Heart right ventricle (tissue), 16 donors: ENCODE measurements at regions of chr5 and their contacts with region 1.

Region 1: GRCh38 chr5:122845229-122846050 is at the start of gene SNX24:
- DNase-seq: peak; percentile 75 to 84
- ATAC-seq: peak; percentile 89 to 95 (median 92)
- H3K4me3 ChIP-seq: peak within 1 kb of the TSS; percentile 90 to 98 (median 96)
- H3K27ac ChIP-seq: peak within 1 kb of the TSS; percentile 49 to 93 (median 90)
- H3K4me1 ChIP-seq: peaks cover 0 to 43% (median 13%) of the 10 kb centered on the region in 9 donors
- H3K27me3 ChIP-seq: no peaks in the 10 kb centered on the region
- CTCF ChIP-seq: no peak
- total RNA-seq, gene SNX24: 11.7 to 16.3 (median 13.8) TPM

Region 2: DNA sequence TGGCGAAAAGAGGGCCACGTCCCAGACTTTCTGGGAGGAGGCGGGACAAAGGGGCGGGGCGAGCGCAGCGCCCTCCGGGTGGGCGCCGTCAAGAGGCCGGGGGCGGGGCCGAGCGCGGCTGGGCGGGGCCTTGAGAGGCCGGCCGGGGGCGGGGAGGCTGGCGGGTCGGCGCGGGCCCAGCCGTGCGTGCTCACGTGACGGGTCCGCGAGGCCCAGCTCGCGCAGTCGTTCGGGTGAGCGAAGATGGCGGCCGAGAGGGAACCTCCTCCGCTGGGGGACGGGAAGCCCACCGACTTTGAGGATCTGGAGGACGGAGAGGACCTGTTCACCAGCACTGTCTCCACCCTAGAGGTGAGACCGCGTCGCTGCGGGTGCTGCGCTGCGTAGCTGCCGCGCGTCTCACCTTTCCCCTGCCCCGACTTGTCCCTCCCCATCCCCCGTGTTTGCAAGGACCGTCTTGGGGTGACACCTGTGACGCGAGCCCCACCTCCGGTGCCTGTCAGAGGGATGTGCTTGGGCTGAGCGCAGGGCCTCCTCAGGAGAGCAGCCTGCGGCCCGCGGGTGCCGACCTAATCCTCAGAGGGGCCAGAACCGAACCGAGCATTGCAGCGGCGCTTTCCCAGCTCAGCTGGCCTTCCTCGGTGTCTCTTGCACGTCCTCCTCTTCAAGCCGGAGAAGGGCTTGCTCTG is 70.4 kb before region 1 on chr5 and contains the start of gene SNX2:
- intact Hi-C with region 1: loop called in 4 of 10 experiments (anchors 2 to 10 kb)
- DNase-seq: peak; percentile 91 to 97
- ATAC-seq: peak; percentile 98 to 100 (median 100)
- H3K4me3 ChIP-seq: peak within 1 kb of the TSS; percentile 63 to 96 (median 80)
- H3K27ac ChIP-seq: peak within 1 kb of the TSS in 9 of 10 donors; percentile 57 to 93 (median 86)
- H3K4me1 ChIP-seq: peaks cover 0 to 57% (median 19%) of the 10 kb centered on the region in 9 donors
- H3K27me3 ChIP-seq: no peaks in the 10 kb centered on the region
- CTCF ChIP-seq: peak in 5 of 9 donors; percentile 8 to 36 (median 22)
- total RNA-seq, gene SNX2: 30.6 to 48.5 (median 36.1) TPM